ENCODE measurements at regions of chr1 and their contacts with region 1.

Region 1: DNA sequence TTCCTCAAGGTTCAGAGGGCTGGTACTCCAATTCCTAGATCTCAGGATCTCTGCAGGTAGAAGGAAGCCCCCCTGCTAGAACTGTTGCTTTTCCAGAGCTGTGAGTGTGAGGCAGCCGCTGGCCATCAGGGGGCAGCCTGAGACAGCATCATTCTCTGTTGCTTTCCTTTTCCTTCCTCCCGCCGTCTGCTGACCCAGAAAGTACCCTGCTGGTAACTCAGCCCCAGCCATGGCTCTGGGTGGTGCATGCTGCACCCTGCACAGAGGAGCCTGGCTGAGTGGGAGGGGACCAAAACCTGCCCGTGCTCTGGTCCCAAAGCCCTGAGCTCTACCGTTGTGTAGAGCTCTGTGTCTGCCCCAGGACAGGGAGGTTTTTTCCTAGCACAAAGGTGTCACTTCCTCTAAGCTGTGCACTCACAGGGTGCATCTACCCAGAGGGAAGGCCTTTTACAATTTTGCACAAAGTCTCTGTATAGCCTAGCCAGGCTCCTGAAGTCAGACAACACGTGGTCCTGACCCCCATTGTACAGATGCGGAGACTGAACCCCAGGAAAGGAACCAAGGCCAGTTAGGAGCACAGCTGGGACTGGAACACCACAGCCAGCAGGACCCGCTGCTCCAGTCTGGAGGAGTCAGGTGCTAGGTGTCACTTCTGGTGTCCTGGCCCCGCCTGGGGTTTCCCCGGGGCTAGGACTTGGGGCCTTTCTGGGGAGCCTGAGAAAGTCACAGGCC is 5.6 kb upstream of the FAM131C start:
- H3K4me3 ChIP-seq: no peak overlapping the region
- H3K27ac ChIP-seq: no peak overlapping the region
- H3K4me1 ChIP-seq: no peaks in the 10 kb centered on the region
- CTCF ChIP-seq: peak; percentile 92

Region 2: DNA sequence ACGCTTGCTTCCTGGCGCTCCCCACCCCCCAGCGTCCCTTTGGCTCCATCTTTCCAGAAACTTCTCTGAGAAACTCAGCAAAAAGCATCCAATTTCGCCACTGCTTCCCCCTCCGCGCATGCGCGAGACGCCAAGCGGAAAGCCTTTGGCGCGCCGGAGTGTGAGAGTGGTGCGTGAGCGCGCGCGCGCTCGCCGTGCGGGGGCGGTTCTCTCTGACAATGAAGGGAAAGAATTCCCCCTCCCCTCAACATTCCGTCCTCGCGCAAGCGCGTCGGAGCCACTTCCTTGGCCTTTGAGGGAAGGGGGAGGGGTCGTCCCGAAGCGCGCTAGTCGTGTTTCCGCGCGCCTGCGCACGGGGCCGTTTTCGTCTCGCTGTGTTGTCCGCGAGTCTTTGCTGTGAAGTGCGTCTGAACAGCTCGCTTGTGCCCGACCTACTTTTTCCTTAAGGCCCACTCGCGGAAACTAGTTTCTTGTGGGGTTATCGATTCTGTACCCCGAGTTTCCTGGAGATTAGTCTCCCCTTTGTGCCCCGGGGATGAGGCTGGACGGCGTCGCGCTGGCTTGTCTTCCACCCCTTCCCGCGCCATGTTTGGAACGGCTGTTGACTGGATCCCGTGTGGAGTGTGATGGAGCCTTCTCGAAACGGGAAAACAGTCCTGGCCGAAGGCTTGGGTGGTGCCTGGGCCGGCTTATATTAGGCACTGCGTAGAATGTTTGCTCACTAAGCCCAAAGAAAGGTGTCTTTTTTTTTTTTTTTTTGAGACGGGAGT is 243.2 kb before region 1 on chr1:
- CTCF ChIA-PET with region 1: no interaction called
- POLR2A ChIA-PET with region 1: no interaction called
- H3K4me3 ChIP-seq: peak overlapping the region; percentile 79
- H3K27ac ChIP-seq: peak overlapping the region; percentile 98
- H3K4me1 ChIP-seq: peaks cover 5% of the 10 kb centered on the region
- CTCF ChIP-seq: no peak; the same call in 1 of the 2 replicates

Region 3: DNA sequence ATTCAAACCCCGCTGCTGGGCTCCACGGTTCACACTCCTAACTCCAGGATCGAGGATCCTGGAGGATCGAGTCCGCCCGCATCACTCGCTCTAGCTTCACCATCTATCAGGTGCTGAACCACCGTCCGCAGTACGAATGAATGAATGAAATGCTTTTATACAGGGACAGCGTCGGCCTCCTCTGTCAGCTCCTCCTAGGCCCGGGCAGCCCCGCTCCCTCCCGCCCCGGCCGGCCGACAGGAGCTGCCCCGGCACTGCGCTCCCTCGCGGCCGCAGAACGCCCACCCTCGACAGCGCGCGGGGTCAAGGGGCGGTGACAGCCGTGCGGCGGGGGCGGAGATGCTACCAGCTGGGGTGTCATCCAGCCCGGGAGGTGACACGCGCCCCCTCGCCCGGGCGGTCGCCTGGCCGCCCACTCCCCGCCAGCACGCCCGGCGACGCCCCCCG is 103.7 kb before region 1 on chr1:
- CTCF ChIA-PET with region 1: no interaction called
- POLR2A ChIA-PET with region 1: no interaction called
- H3K4me3 ChIP-seq: peak overlapping the region; percentile 98
- H3K27ac ChIP-seq: peak overlapping the region; percentile 44; the same call in 1 of the 2 replicates
- H3K4me1 ChIP-seq: no peaks in the 10 kb centered on the region
- CTCF ChIP-seq: peak; percentile 46; the same call in 1 of the 2 replicates

Region 4: DNA sequence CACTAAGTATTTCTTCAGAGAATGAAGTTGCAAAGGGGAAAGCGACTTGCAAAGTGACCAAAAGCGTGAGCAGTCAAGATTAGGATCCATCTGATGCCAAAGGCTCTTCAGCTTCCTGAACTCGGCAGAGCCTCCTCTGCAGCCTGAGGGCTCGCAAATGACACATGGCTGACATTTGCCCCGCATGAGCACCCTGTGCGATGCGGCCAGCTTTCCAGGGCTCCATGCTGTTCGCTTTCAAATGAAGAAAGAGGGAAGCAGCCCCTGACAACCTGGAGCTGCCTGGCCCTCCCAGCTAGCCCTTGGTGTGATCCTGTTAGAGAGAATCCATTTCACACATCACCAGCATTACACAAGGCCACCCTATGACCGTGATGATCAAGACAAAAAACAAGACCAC is 14.5 kb after region 1 on chr1:
- CTCF ChIA-PET with region 1: interaction called, 22 read pairs
- POLR2A ChIA-PET with region 1: no interaction called
- H3K4me3 ChIP-seq: no peak overlapping the region
- H3K27ac ChIP-seq: no peak overlapping the region
- H3K4me1 ChIP-seq: no peaks in the 10 kb centered on the region
- CTCF ChIP-seq: no peak

Region 5: GRCh38 chr1:16122916-16123315 is 43.8 kb after region 1 on chr1:
- CTCF ChIA-PET with region 1: interaction called, 34 read pairs
- POLR2A ChIA-PET with region 1: no interaction called
- H3K4me3 ChIP-seq: no peak overlapping the region
- H3K27ac ChIP-seq: peak overlapping the region; percentile 29; the same call in 1 of the 2 replicates
- H3K4me1 ChIP-seq: peaks cover 6% of the 10 kb centered on the region
- CTCF ChIP-seq: no peak

Region 6: DNA sequence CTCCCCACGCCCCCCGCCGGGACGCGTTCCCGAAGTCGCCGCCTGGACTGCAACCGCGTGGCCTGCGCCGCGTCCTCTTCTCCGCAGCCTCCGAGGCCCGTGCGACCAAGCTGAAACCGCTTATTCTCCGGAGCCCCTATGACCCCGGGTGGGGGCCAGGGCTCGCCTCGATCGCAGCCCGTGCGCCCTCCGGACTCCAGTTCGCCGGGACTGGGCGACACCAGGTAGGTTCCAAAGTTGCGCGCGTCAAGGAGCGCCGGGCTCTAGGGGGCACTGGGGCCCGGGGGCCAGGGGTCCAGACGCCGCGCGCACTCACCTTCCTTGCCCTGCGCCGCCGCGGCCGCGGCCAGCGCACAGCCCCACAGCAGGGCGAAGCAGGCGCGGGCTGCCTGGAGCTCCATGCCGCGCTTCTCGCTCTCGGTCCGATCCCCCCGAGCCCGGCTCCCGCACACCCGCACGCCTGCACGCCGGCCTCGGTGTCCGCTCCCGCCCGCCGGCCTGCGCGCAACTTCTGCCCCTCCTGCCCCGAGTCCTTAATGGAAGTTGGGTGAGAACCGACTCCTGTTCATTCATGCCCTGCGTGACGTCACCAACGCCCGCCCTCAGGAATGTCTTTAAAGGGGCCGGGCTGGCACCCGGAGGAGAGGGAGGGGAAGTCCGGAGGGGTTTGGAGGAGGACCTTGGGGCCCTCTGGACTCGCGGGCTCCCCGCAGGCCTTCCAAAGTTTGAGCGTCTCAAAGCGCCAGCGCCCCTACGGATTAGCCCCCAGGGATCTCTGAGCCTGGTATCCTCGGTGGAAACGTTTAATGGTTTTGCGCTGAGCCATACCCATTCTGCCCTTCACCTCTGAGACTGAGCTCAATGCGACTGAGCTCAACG is 76.7 kb after region 1 on chr1 and contains the start of gene EPHA2:
- CTCF ChIA-PET with region 1: interaction called, 117 read pairs
- POLR2A ChIA-PET with region 1: interaction called, 5 read pairs
- H3K4me3 ChIP-seq: peak within 1 kb of the TSS; percentile 68
- H3K27ac ChIP-seq: peak within 1 kb of the TSS; percentile 63; the same call in 1 of the 2 replicates
- H3K4me1 ChIP-seq: peaks cover 4% of the 10 kb centered on the region; the same call in 1 of the 2 replicates
- CTCF ChIP-seq: peak; percentile 34; the same call in 1 of the 2 replicates

Region 7: DNA sequence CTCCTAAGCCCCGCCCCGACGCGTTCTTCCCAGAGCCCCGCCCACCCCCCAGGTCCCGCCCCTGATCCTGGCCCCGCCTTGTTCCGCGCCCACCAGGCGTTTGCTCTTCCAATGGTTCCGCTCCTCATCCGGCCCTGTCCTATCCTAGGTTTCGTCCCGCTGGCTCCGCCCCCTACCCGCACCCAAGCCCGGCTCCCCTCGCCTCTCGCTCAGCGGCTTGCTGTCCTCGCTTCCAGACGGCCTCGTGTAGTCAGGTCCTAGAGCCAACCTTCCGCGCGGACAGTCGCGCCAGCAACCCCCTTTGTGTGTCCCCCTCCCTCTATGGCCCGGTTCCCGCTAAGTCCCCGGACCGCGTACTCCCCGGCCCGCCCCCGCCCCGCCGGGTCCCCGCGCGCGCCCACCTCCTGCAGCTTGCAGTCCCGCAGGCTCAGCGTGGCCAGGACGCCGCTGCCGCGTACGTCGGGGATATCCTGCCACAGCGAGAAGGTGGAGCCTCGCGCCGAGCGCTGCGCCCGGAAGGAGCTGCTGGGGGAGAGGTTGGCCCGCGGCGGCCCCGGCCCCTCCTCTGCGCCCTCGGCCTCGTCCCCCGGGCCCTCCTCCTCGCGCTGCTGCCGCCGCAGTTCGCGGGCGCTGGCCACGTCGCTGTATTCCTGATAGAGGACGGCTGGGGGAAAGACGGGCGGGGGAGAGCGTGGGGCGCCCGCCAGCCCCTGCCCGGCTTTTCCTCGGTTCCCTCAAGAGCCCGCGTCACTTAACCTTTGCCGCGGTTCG is 127.6 kb after region 1 on chr1:
- CTCF ChIA-PET with region 1: interaction called, 18 read pairs
- POLR2A ChIA-PET with region 1: interaction called, 3 read pairs
- H3K4me3 ChIP-seq: peak overlapping the region; percentile 31
- H3K27ac ChIP-seq: peak overlapping the region; percentile 57
- H3K4me1 ChIP-seq: no peaks in the 10 kb centered on the region
- CTCF ChIP-seq: no peak